IMR-90 (cell line): ENCODE measurements at regions of chr6 and their contacts with region 1.

Region 1: GRCh38 chr6:56851541-56852259 is 103.2 kb upstream of the BEND6 start:
- DNase-seq: peak; percentile 89
- ATAC-seq: peak; percentile 76
- H3K4me3 ChIP-seq: peak overlapping the region; percentile 64
- H3K27ac ChIP-seq: peak overlapping the region; percentile 92
- H3K4me1 ChIP-seq: peaks cover 16% of the 10 kb centered on the region
- H3K27me3 ChIP-seq: no peaks in the 10 kb centered on the region
- CTCF ChIP-seq: peak; percentile 68
- POLR2A ChIP-seq: peak; percentile 72
- RAD21 ChIP-seq: peak; percentile 81

Region 2: GRCh38 chr6:56144538-56145324 is 707.0 kb before region 1 on chr6:
- CTCF ChIA-PET with region 1: no interaction called
- POLR2A ChIA-PET with region 1: no interaction called
- dilution Hi-C with region 1: no loop called
- in situ Hi-C with region 1: no loop called
- intact Hi-C with region 1: no loop called
- DNase-seq: peak; percentile 64
- ATAC-seq: peak; percentile 71
- H3K4me3 ChIP-seq: no peak overlapping the region
- H3K27ac ChIP-seq: no peak overlapping the region
- H3K4me1 ChIP-seq: peaks cover 2% of the 10 kb centered on the region; the same call in 1 of the 2 replicates
- H3K27me3 ChIP-seq: no peaks in the 10 kb centered on the region
- CTCF ChIP-seq: no peak
- POLR2A ChIP-seq: no peak
- RAD21 ChIP-seq: no peak

Region 3: GRCh38 chr6:56708810-56709597 is 142.7 kb before region 1 on chr6:
- CTCF ChIA-PET with region 1: interaction called, 4 read pairs
- POLR2A ChIA-PET with region 1: interaction called, 3 read pairs
- dilution Hi-C with region 1: no loop called
- in situ Hi-C with region 1: no loop called
- intact Hi-C with region 1: loop called (anchors 2 kb)
- DNase-seq: peak; percentile 76
- ATAC-seq: peak; percentile 48
- H3K4me3 ChIP-seq: no peak overlapping the region; the same call in 1 of the 2 replicates
- H3K27ac ChIP-seq: no peak overlapping the region
- H3K4me1 ChIP-seq: peaks cover 17% of the 10 kb centered on the region
- H3K27me3 ChIP-seq: no peaks in the 10 kb centered on the region
- CTCF ChIP-seq: peak; percentile 54
- POLR2A ChIP-seq: no peak
- RAD21 ChIP-seq: peak; percentile 41

Region 4: GRCh38 chr6:56725254-56725653 is 126.4 kb before region 1 on chr6:
- CTCF ChIA-PET with region 1: interaction called, 11 read pairs
- POLR2A ChIA-PET with region 1: no interaction called
- dilution Hi-C with region 1: no loop called
- in situ Hi-C with region 1: no loop called
- intact Hi-C with region 1: no loop called
- DNase-seq: no peak
- ATAC-seq: no peak
- H3K4me3 ChIP-seq: no peak overlapping the region
- H3K27ac ChIP-seq: no peak overlapping the region
- H3K4me1 ChIP-seq: peaks cover 8% of the 10 kb centered on the region
- H3K27me3 ChIP-seq: no peaks in the 10 kb centered on the region
- CTCF ChIP-seq: no peak
- POLR2A ChIP-seq: no peak
- RAD21 ChIP-seq: no peak

Region 5: DNA sequence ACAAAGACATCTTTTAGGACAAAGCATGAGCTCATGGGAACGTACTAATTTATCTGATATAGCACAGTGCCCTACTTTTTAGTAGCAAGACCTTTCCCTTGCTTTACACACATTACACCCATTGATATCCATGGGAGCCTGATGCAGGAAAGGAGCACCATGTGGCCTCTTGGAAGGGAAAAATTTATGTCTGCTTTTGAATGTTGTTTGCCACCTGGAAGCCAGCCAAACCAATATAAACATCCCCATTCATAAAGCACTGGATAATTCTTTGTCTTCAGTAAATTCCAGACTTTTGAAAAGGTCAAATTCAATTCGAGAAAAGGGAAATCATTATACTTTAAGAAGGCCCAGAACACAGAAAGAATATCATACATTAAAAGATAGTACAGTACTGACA is 49.1 kb before region 1 on chr6:
- CTCF ChIA-PET with region 1: no interaction called
- POLR2A ChIA-PET with region 1: no interaction called
- dilution Hi-C with region 1: no loop called
- in situ Hi-C with region 1: no loop called
- intact Hi-C with region 1: no loop called
- DNase-seq: peak; percentile 69
- ATAC-seq: no peak
- H3K4me3 ChIP-seq: no peak overlapping the region
- H3K27ac ChIP-seq: no peak overlapping the region
- H3K4me1 ChIP-seq: peaks cover 18% of the 10 kb centered on the region
- H3K27me3 ChIP-seq: no peaks in the 10 kb centered on the region
- CTCF ChIP-seq: no peak
- POLR2A ChIP-seq: no peak
- RAD21 ChIP-seq: no peak

Region 6: DNA sequence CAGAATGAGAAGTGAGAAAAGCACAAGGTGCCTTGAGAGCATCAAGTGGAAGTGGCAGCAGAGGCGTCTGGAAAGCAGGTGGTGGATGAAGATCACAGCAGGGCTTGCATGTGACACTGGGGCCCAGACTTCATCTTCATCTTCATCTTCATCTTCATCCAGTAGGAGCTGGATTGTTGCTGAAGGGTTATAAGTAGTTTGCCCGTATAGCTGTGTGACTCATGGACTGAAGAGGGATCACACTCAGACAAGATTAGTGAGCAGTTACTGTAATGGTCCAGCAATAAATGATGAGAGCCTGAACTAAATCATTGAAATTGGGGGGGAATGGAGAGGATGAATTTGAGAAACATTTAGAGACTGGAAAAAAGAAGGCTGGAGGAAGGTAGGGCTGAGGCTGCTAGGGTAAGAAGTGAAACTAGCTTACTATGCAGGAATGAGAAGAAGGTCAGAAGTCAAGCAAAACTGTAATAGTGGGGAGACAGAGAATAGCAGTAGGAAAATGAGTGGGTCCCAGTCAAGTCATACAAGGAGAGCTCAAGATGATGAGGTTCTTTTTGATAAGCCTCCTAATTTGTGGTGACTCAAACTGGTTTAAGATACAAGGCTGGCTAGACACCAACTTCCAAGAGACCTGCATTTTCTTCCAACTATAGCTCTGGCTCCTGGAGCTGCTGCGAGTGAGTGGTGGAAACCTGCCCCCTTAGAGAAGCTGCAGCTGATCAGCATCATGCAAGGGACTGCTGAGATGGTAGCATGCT is 10.9 kb after region 1 on chr6:
- CTCF ChIA-PET with region 1: interaction called, 21 read pairs
- POLR2A ChIA-PET with region 1: interaction called, 3 read pairs
- dilution Hi-C with region 1: no loop called
- in situ Hi-C with region 1: no loop called
- intact Hi-C with region 1: no loop called
- DNase-seq: peak; percentile 69
- ATAC-seq: peak; percentile 24
- H3K4me3 ChIP-seq: no peak overlapping the region; the same call in 1 of the 2 replicates
- H3K27ac ChIP-seq: peak overlapping the region; percentile 72
- H3K4me1 ChIP-seq: peaks cover 25% of the 10 kb centered on the region
- H3K27me3 ChIP-seq: no peaks in the 10 kb centered on the region
- CTCF ChIP-seq: no peak
- POLR2A ChIP-seq: no peak
- RAD21 ChIP-seq: no peak

Region 7: DNA sequence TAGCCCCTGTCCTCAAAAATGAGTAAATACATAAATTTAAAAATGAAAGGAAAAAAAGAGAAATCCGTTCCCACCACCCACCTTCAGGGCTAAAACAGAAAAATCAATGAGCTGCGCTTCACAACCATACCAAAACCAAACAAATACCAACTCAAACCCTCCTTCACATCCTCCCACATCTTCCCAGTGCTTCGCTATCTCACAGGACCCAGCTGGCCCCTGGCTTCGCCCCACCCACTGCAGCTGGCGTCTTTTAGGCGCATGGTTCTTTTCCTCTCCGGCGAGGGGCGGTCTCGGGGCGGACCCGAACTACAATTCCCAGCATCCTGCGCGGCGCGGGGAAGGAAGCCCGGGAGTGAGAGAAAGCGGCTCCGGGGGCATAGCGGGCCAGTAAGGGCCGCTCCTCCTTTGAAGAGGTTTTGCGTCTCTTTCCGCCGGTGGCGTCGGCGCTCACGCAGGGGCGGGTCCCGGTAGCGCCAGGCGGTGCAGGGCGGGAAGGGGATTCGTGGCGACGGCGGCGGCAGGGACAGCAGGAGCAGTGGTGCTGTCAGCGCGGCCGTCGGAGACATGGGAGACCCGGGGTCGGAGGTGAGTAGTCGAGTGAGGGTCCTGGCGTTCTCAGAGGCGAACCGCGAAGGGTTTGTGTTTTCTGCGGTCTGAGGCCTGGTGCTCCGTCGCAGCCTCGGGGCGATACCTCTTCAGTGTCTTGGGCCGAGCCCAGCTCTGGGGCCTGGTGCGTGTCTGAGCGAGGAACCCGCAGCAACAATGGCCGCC is 238.2 kb after region 1 on chr6 and contains the start of gene ZNF451:
- CTCF ChIA-PET with region 1: no interaction called
- POLR2A ChIA-PET with region 1: no interaction called
- dilution Hi-C with region 1: no loop called
- in situ Hi-C with region 1: no loop called
- intact Hi-C with region 1: no loop called
- DNase-seq: peak; percentile 95
- ATAC-seq: peak; percentile 91
- H3K4me3 ChIP-seq: peak within 1 kb of the TSS; percentile 43
- H3K27ac ChIP-seq: peak within 1 kb of the TSS; percentile 65
- H3K4me1 ChIP-seq: peaks cover 10% of the 10 kb centered on the region
- H3K27me3 ChIP-seq: no peaks in the 10 kb centered on the region
- CTCF ChIP-seq: 0 out of 2 replicates have a peak, but pooled peaks have one; percentile 8
- POLR2A ChIP-seq: peak; percentile 87
- RAD21 ChIP-seq: 0 out of 2 replicates have a peak, but pooled peaks have one; percentile 11
- total RNA-seq, gene ZNF451: 48.6 and 63.0 TPM in 2 replicates